ENCODE measurements at regions of chr12 and their contacts with region 1.

Region 1: DNA sequence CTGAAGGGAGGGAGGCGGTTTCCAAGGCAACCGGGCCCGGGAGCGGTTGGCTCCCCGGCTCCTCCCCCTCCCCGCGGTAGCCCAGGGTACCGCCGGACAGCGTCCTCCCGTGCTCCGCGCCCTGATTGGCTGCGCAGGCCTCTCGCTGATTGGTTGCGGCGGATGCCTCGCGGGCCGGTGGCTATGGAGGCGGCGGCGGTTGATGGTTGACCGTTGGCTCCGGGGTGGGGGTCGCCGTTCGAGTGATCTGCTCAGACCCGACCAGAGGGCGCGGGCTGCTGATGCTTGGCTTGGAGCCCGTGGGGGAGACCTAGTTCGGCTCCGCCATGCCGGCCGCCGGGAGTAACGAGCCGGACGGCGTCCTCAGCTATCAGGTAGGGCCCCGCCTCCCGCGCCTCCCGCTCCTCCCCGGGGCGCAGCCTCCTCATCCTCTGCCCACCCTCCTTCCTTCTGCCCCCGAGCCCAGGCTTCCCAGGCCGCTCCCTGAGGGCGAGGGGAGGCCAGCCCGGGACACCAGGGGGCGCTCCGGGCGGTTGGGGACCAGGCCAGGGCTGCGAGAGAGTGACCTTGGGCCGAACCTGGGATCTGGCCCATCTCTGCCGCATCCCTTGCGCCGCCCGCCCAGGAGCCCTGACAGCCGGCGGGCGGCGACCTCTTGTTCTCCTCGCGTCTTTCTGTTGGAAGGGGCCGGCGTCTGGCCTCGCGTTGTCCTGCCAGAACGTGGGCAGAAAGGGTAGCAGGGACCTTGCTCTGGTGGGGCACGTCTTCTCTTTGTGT is at the start of gene SLC4A8:
- DNase-seq: peak; percentile 79
- H3K4me3 Mint-ChIP-seq: peak within 1 kb of the TSS; percentile 77
- H3K27ac Mint-ChIP-seq: no peak within 1 kb of the TSS
- H3K4me1 Mint-ChIP-seq: peaks cover 14% of the 10 kb centered on the region
- H3K27me3 Mint-ChIP-seq: peaks cover 5% of the 10 kb centered on the region
- total RNA-seq, gene SLC4A8: 1.6 and 2.6 TPM in 2 replicates

Region 2: DNA sequence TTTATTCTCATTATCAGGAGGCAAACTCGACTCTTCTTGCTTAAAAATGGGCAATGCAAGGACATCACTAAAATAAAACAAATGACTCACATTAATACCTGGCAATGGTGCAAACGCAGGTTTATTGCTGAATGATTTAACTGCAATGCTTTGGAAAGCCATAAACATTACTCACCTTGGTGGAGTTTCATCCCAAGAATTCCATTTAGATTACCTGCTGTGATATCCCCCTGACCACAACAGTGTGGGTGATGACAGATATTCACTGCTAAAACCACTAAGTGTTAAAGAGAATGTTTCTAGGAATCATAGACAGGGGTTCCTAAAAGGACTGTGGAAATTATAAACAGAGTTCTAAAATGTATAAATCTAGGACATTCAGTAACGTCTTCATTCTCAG is 306.1 kb before region 1 on chr12:
- intact Hi-C with region 1: no loop called
- DNase-seq: no peak
- H3K4me3 Mint-ChIP-seq: no peak overlapping the region
- H3K27ac Mint-ChIP-seq: no peak overlapping the region
- H3K4me1 Mint-ChIP-seq: peaks cover 8% of the 10 kb centered on the region
- H3K27me3 Mint-ChIP-seq: no peaks in the 10 kb centered on the region

Region 3: DNA sequence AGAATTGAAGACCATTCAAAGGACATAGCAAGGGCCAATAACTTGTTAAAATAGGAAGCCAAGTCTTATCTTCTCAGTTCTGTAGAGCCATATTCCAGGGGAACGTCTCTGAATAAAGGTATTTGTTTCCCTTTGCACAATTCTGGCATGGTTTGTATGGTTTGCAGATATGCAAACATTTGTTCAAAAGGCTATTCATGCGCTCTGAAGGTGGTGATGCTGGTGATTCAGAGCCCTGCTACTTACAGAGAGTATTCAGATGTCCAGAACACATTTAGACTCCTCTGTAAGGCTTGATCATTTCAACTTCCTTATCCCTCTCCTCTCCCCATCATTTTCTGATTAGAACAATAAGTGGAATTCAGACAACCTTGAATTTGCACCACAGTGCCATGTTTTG is 35.7 kb after region 1 on chr12:
- intact Hi-C with region 1: no loop called
- DNase-seq: no peak
- H3K4me3 Mint-ChIP-seq: no peak overlapping the region
- H3K27ac Mint-ChIP-seq: no peak overlapping the region
- H3K4me1 Mint-ChIP-seq: no peaks in the 10 kb centered on the region
- H3K27me3 Mint-ChIP-seq: peaks cover 2% of the 10 kb centered on the region

Region 4: DNA sequence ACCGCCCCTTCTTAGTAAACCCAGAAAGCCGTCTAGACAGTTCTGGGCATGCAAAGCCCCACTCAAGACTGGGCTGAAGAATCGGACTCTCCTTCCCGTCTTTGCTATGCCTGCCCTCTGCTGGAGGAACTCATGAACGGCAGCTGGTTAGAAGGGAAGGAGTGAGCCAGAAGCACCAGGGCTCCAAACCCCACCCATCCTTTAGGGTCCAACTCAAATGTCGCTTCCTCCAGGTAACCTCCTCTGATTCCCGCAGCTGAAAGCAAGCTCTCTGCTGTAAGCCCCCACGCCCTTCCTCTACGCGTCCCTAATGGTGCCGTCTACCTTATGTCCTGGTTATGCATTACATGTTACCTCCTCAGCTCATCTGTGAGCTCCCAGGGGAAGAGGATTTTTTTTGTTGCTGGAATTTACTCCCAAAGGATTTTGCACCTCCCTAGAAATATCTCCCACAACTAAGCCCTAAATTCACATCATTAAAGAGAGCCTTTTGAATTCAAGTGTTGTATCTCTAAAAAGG is 107.2 kb after region 1 on chr12:
- intact Hi-C with region 1: loop called (anchors 1 kb)
- DNase-seq: peak; percentile 66
- H3K4me3 Mint-ChIP-seq: no peak overlapping the region
- H3K27ac Mint-ChIP-seq: no peak overlapping the region
- H3K4me1 Mint-ChIP-seq: peaks cover 3% of the 10 kb centered on the region
- H3K27me3 Mint-ChIP-seq: peaks cover 18% of the 10 kb centered on the region

Region 5: DNA sequence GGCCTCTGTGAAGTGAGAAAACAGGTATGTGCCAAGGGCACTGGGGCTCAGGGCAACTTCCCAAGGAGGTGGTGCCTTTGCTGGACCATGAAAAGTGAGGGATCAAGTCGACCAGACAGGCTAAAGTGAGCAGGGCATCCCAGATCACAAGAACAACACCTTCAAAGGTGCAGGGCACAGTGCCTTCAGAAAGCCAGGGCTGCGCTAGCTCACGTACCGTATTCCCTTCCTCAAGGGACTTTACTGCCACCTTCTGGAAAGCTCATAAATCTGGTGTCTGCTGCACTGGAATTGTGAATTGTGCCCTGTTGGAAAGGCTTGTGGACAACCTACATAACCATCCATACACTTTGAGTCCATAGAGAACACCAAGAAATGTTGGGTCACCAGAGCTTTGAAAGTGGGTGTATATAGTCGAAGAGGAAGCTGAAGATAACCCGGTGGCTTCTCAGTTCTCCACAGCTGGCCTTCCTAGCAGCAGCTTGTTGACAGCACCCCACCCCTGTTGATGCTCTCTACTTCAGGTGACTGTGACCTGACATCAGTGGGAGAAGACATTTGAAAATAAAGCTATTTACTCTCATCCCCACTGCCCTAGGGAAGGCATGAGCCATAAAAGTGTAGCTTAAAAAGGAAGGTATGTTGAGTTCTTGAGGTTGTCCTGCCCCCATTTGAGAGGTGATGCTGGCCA is 399.2 kb after region 1 on chr12:
- intact Hi-C with region 1: loop called (anchors 5 kb)
- DNase-seq: no peak
- H3K4me3 Mint-ChIP-seq: no peak overlapping the region
- H3K27ac Mint-ChIP-seq: no peak overlapping the region
- H3K4me1 Mint-ChIP-seq: peaks cover 20% of the 10 kb centered on the region
- H3K27me3 Mint-ChIP-seq: peaks cover 14% of the 10 kb centered on the region

Region 6: DNA sequence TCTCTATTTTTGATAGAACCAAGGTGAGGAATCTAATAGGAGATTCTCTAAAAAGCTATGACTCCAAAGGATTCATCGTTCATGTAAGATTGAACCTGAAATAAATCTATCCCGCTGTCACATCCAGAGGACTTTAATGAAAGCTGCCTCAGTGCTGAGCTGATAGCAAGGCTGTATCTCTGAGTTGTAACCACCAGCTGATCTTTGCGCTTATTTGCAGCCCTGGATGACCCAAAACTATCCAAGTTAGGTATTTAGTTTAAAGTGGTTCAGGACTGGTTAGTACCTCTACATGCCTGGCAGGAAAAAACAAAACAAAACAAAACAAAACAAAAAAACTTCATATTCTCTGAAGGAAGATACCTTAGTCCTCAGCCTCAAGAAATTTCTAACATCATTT is 454.3 kb after region 1 on chr12:
- intact Hi-C with region 1: loop called (anchors 5 kb)
- DNase-seq: no peak
- H3K4me3 Mint-ChIP-seq: no peak overlapping the region
- H3K27ac Mint-ChIP-seq: no peak overlapping the region
- H3K4me1 Mint-ChIP-seq: peaks cover under 1% of the 10 kb centered on the region
- H3K27me3 Mint-ChIP-seq: peaks cover 8% of the 10 kb centered on the region

Measured in activated T-helper 2 cell treated with anti-CD3 and anti-CD28 coated beads, Interferon-gamma antibody, Interleukin-2, Interleukin-4, amounts not matched to agents 10 μg/mL and 5 μg/mL and 100 μg/mL, durations not matched to agents 14 hours and 24 hours and 36 hours (primary cell).